ENCODE measurements at regions of chr11 and their contacts with region 1.

Region 1: DNA sequence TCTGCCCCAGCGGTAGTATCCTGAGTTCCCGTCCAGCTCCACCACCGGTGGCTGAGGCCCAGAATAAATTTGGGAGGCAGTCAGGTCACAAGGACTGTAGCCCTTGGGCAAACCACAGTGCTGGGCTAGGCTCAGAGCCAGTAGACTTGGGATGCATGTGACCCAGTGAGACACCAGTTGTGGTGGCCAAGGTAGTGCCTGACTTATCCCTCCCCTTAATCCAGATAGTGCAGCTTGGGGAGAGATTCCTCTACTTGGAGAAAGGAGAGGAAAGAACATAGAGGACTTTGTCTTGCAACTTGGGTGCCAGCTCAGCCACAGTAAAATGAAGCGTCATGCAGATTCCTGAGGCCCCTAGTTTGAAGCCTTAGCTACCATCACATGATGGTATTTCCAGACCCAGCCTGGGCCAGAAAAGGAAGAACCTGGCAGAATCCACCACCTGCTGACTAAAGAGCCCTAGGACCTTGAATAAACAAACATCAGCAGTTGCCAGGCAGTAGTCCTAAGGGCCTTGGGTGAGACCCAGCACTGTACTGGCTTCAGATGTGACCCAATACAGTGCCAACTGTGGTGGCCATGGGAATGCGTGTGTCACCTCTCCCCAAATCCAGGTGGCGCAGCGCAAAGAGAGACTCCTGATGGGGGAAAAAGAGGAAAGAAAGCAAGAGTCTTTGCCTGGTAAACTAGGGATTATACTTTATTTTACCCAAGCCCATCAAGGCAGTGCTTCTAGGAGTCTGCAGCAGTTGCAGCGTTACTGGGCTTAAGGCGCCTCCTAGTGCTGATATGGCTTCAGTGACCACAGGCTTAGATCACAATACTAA is 17.0 kb upstream of the DDX10 start:
- DNase-seq: peak; percentile 53
- H3K4me3 Mint-ChIP-seq: no peak overlapping the region
- H3K27ac Mint-ChIP-seq: no peak overlapping the region
- H3K4me1 Mint-ChIP-seq: no peaks in the 10 kb centered on the region
- H3K27me3 Mint-ChIP-seq: no peaks in the 10 kb centered on the region
- CTCF ChIP-seq: peak; percentile 55

Region 2: DNA sequence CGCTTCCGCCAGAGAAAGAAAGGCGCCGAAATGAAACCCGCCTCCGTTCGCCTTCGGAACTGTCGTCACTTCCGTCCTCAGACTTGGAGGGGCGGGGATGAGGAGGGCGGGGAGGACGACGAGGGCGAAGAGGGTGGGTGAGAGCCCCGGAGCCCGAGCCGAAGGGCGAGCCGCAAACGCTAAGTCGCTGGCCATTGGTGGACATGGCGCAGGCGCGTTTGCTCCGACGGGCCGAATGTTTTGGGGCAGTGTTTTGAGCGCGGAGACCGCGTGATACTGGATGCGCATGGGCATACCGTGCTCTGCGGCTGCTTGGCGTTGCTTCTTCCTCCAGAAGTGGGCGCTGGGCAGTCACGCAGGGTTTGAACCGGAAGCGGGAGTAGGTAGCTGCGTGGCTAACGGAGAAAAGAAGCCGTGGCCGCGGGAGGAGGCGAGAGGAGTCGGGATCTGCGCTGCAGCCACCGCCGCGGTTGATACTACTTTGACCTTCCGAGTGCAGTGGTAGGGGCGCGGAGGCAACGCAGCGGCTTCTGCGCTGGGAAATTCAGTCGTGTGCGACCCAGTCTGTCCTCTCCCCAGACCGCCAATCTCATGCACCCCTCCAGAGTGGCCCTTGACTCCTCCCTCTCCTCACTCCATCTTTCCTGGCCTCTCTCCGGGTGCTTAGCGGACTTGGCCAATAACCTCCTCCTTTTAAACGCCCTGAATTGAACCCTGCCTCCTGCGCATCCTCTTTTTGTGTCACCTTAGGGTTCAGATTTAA is 425.0 kb before region 1 on chr11 and contains the start of gene ATM:
- CTCF ChIA-PET with region 1: no interaction called
- intact Hi-C with region 1: loop called (anchors 5 kb)
- DNase-seq: peak; percentile 94
- H3K4me3 Mint-ChIP-seq: no peak within 1 kb of the TSS
- H3K27ac Mint-ChIP-seq: no peak within 1 kb of the TSS
- H3K4me1 Mint-ChIP-seq: peaks cover 30% of the 10 kb centered on the region
- H3K27me3 Mint-ChIP-seq: no peaks in the 10 kb centered on the region
- CTCF ChIP-seq: peak; percentile 43
- total RNA-seq, gene ATM: 39.5 and 39.8 TPM in 2 replicates

Region 3: GRCh38 chr11:108340970-108341369 is 306.9 kb before region 1 on chr11:
- CTCF ChIA-PET with region 1: no interaction called
- intact Hi-C with region 1: loop called (anchors 10 kb)
- DNase-seq: peak; percentile 24
- H3K4me3 Mint-ChIP-seq: no peak overlapping the region
- H3K27ac Mint-ChIP-seq: peak overlapping the region; percentile 92
- H3K4me1 Mint-ChIP-seq: peaks cover 16% of the 10 kb centered on the region
- H3K27me3 Mint-ChIP-seq: no peaks in the 10 kb centered on the region
- CTCF ChIP-seq: no peak

Region 4: DNA sequence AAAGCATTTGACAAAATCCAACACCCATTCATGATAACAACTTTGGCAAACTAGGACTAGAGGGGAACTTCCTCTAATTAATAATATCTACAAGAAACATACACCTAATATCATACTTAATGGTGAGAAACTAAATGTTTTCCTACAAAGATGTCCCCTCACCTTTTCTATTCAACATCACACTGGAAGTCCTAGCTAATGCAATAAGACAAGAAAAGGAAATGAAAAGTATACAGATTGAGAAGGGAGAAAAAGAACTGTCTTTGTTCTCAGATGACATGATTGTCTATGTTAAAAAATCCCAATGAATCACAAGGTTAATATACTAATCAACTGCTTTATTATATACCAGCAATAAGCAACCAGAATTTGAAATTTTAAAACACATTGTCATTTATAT is 233.0 kb before region 1 on chr11:
- CTCF ChIA-PET with region 1: no interaction called
- intact Hi-C with region 1: loop called (anchors 1 kb)
- DNase-seq: no peak
- H3K4me3 Mint-ChIP-seq: no peak overlapping the region
- H3K27ac Mint-ChIP-seq: no peak overlapping the region
- H3K4me1 Mint-ChIP-seq: no peaks in the 10 kb centered on the region
- H3K27me3 Mint-ChIP-seq: no peaks in the 10 kb centered on the region
- CTCF ChIP-seq: no peak

Region 5: GRCh38 chr11:108497317-108498045 is 150.4 kb before region 1 on chr11:
- CTCF ChIA-PET with region 1: no interaction called
- intact Hi-C with region 1: loop called (anchors 5 kb)
- DNase-seq: peak; percentile 74
- H3K4me3 Mint-ChIP-seq: peak overlapping the region; percentile 62
- H3K27ac Mint-ChIP-seq: peak overlapping the region; percentile 83
- H3K4me1 Mint-ChIP-seq: peaks cover 10% of the 10 kb centered on the region
- H3K27me3 Mint-ChIP-seq: no peaks in the 10 kb centered on the region
- CTCF ChIP-seq: no peak

Region 6: DNA sequence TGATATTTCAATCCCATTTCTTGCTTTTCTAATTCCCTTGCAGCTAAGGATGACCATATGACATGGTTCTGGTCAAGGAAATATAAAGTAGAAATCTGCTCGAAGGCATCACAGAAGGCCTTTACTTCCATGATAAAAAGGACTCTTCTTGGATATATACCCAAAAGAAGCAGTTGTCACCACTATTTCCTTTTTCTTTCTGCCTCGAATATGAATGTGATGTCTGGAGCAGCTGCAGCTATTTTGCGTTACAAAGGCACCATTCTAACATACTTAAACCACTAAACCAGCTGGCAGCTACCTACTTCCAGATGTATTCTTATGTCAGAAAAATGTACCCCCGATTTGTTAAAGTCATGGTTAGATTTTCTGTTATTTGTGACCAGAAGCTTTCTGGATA is 73.2 kb before region 1 on chr11:
- CTCF ChIA-PET with region 1: no interaction called
- intact Hi-C with region 1: no loop called
- DNase-seq: no peak
- H3K4me3 Mint-ChIP-seq: no peak overlapping the region
- H3K27ac Mint-ChIP-seq: no peak overlapping the region
- H3K4me1 Mint-ChIP-seq: peaks cover 10% of the 10 kb centered on the region
- H3K27me3 Mint-ChIP-seq: no peaks in the 10 kb centered on the region
- CTCF ChIP-seq: no peak

Region 7: DNA sequence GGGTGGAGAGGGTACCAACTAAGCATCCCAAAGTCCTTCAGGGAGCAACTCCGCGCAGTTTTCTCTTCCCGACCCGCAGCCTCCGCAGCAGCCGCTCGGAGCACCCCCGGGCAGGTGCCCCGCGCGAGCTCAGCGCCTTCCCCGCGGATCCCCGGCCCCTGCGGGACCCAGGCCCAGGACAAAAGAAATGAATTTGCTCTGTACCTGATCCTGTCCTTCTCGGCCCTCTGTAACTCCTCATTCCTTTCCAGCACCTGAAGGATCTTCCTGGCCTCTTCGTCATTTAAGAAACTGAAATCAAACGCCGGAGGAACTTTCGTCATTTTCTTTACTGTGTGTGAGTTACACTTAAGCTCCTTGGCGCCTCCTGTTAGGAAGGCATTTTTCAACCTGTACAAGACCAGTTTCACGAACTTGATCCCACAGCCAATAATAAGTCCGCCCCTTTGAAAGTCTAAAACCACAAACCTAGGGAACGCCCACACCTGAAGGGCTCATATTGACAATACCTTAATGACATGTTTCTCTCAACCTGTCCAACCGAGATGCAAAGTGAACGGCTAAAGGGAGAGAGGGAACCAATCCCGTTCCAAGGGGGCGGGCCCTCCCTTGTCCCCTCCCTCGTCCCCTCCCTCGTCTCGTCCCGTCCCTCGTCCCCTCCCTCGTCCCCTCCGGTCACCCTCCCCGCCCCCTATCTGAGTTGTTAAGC is 54.5 kb before region 1 on chr11 and contains the start of gene EXPH5:
- CTCF ChIA-PET with region 1: no interaction called
- intact Hi-C with region 1: loop called (anchors 5 kb)
- DNase-seq: peak; percentile 95
- H3K4me3 Mint-ChIP-seq: peak within 1 kb of the TSS; percentile 86
- H3K27ac Mint-ChIP-seq: peak within 1 kb of the TSS; percentile 92
- H3K4me1 Mint-ChIP-seq: peaks cover 10% of the 10 kb centered on the region
- H3K27me3 Mint-ChIP-seq: no peaks in the 10 kb centered on the region
- CTCF ChIP-seq: no peak
- total RNA-seq, gene EXPH5: 14.0 and 17.0 TPM in 2 replicates

Region 8: GRCh38 chr11:108635071-108635470 is 12.8 kb before region 1 on chr11:
- CTCF ChIA-PET with region 1: no interaction called
- intact Hi-C with region 1: no loop called
- DNase-seq: no peak
- H3K4me3 Mint-ChIP-seq: no peak overlapping the region
- H3K27ac Mint-ChIP-seq: no peak overlapping the region
- H3K4me1 Mint-ChIP-seq: peaks cover 11% of the 10 kb centered on the region
- H3K27me3 Mint-ChIP-seq: no peaks in the 10 kb centered on the region
- CTCF ChIP-seq: no peak

Region 9: DNA sequence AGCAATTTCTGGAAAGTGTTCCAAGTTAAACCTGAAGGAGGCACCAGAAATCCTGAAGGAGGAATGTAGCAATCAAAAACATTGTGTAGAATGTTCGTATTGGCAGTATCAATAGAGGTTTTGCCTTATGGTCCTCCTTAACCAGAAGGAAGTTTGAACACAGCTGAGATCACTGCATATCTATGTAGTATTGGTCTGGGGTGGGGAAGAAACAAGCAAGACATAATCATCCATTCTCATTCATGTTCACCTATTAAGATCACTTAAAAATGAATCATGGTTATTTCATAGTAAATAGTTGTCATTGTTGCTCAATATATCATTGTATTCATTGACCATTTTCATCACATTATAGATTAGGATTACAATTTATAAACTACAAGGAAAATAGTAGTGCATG is 177.5 kb after region 1 on chr11:
- CTCF ChIA-PET with region 1: no interaction called
- intact Hi-C with region 1: no loop called
- DNase-seq: no peak
- H3K4me3 Mint-ChIP-seq: no peak overlapping the region
- H3K27ac Mint-ChIP-seq: no peak overlapping the region
- H3K4me1 Mint-ChIP-seq: no peaks in the 10 kb centered on the region
- H3K27me3 Mint-ChIP-seq: no peaks in the 10 kb centered on the region
- CTCF ChIP-seq: no peak

Measured in Calu3 (cell line).